Left colon (tissue), 2 donors: ENCODE measurements at regions of chr17 and their contacts with region 1.

Region 1: GRCh38 chr17:68462381-68463210 is 5.3 kb upstream of the WIPI1 start:
- DNase-seq: peak; percentile 60 to 71
- ATAC-seq: peak; percentile 82

Region 2: DNA sequence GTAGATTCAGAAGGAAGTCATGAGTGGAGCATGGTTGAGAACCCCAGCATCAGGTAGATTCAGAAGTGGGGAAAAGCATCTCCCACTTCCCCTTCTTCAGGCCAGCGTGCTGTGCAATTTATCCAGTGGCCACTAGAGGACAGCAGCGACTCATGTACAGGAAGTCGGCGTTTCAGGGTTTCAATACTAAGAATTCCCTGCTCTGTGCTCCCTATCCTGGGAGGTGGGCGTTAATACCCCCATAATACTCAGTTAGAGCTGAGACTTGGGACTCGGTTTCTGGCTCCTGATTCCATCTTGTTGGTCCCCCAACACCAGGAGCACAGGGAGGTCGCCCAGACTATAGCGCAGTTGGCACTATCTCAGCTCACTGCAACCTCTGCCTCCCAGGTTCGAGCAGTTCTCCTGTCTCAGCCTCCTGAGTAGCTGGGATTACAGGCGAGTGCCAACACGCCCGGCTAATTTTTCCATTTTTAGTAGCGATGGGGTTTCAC is 290.1 kb before region 1 on chr17:
- intact Hi-C with region 1: loop called in 1 of 2 experiments (anchors 5 kb)
- DNase-seq: peak; percentile 46 to 79
- ATAC-seq: peak; percentile 74

Region 3: GRCh38 chr17:68260051-68260762 is 202.4 kb before region 1 on chr17:
- intact Hi-C with region 1: loop called in 1 of 2 experiments (anchors 5 kb)
- DNase-seq: no peak
- ATAC-seq: no peak